AG04450 (cell line): ENCODE measurements at regions of chr7 and their contacts with region 1.

Region 1: GRCh38 chr7:101507791-101508252 is 121.3 kb downstream of the MYL10 start:
- DNase-seq: no peak
- H3K4me3 ChIP-seq: no peak overlapping the region
- H3K27ac ChIP-seq: no peak overlapping the region
- H3K27me3 ChIP-seq: peaks cover 26% of the 10 kb centered on the region
- CTCF ChIP-seq: peak; percentile 68

Region 2: DNA sequence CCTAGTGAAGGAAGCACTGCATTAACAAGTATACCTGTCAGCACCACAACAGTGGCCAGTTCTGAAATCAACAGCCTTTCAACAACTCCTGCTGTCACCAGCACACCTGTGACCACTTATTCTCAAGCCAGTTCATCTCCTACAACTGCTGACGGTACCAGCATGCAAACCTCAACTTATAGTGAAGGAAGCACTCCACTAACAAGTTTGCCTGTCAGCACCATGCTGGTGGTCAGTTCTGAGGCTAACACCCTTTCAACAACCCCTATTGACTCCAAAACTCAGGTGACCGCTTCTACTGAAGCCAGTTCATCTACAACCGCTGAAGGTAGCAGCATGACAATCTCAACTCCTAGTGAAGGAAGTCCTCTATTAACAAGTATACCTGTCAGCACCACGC is 471.9 kb before region 1 on chr7:
- CTCF ChIA-PET with region 1: no interaction called
- POLR2A ChIA-PET with region 1: no interaction called
- DNase-seq: no peak
- H3K4me3 ChIP-seq: no peak overlapping the region
- H3K27ac ChIP-seq: no peak overlapping the region
- H3K27me3 ChIP-seq: peaks cover 4% of the 10 kb centered on the region
- CTCF ChIP-seq: no peak

Region 3: DNA sequence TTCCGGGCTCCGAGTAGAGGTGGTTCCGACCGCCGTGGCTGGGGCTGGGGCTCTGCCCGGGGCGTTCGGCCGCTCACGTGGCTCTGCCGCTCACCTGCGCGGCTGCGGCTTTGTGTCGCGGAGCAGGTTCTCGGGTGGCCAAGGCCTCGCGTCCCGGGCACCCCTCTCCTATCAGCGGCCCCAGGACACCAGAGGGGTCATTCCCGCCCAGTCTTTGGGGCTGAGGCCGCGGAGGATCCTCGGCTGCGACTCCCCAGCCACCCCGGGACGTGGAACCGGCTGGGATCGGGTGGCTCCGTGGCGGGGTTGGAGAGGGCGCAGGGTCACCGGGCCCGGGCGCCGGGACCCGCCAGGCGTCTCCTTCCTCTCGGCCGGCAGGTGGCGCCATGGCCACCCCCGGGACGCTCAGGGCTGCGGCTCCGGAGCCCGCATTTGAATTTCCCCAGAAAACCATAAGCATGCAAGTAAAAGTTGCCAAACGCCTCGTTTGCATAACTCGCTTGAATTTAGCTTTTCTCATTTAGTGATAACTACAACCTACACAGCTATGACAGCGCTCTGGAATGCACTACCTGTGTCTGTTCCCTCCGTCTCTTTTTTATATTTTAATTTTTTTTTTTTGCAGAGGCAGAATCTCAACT is 144.0 kb before region 1 on chr7:
- CTCF ChIA-PET with region 1: interaction called, 12 read pairs
- POLR2A ChIA-PET with region 1: no interaction called
- DNase-seq: peak; percentile 7
- H3K4me3 ChIP-seq: peak overlapping the region; percentile 45
- H3K27ac ChIP-seq: no peak overlapping the region
- H3K27me3 ChIP-seq: peaks cover 22% of the 10 kb centered on the region
- CTCF ChIP-seq: peak; percentile 80

Region 4: DNA sequence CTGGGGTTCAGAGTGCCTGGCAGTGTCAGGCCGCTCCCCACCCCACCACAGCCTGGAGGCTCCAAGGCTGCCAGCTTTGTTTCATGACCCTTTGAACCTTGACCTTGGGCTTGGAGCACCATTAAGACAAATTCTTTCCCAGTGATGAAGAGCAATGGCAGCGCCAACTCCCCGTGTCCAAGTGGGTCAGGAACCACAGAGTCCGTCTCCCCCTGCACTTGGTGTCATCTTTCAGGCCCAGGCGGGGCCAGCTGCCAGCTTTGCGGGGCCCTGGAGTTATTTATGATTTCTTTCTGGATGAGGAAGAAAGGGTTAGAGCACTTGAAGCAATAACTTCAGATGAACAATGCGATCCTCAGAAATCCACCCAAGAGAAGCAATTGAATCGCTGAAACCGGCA is 10.5 kb after region 1 on chr7:
- CTCF ChIA-PET with region 1: interaction called, 21 read pairs
- POLR2A ChIA-PET with region 1: interaction called, 7 read pairs
- DNase-seq: peak; percentile 24
- H3K4me3 ChIP-seq: no peak overlapping the region
- H3K27ac ChIP-seq: peak overlapping the region; percentile 68
- H3K27me3 ChIP-seq: peaks cover 6% of the 10 kb centered on the region
- CTCF ChIP-seq: no peak